ENCODE measurements at regions of chr3 and their contacts with region 1.

Region 1: GRCh38 chr3:59575113-59576001 is 525.5 kb upstream of the CFAP20DC start:
- H3K4me3 ChIP-seq: no peak overlapping the region
- H3K27ac ChIP-seq: no peak overlapping the region
- H3K4me1 ChIP-seq: no peaks in the 10 kb centered on the region
- CTCF ChIP-seq: no peak; the same call in 1 of the 2 replicates

Region 2: GRCh38 chr3:59313365-59313764 is 262.0 kb before region 1 on chr3:
- CTCF ChIA-PET with region 1: interaction called, 12 read pairs
- POLR2A ChIA-PET with region 1: no interaction called
- H3K4me3 ChIP-seq: no peak overlapping the region
- H3K27ac ChIP-seq: no peak overlapping the region
- H3K4me1 ChIP-seq: no peaks in the 10 kb centered on the region
- CTCF ChIP-seq: no peak

Measured in HEK293 (cell line).